Activated naive CD4-positive, alpha-beta T cell treated with anti-CD3 and anti-CD28 coated beads for 36 hours (primary cell): ENCODE measurements at regions of chr15 and their contacts with region 1.

Region 1: GRCh38 chr15:81296673-81297072 is 27.3 kb downstream of the STARD5 start:
- DNase-seq: peak; percentile 90
- H3K4me3 Mint-ChIP-seq: peak overlapping the region; percentile 93
- H3K27ac Mint-ChIP-seq: peak overlapping the region; percentile 99
- H3K4me1 Mint-ChIP-seq: peaks cover 66% of the 10 kb centered on the region
- H3K27me3 Mint-ChIP-seq: no peaks in the 10 kb centered on the region

Region 2: GRCh38 chr15:80804965-80805495 is 491.6 kb before region 1 on chr15:
- CTCF ChIA-PET with region 1: no interaction called
- intact Hi-C with region 1: loop called (anchors 10 kb)
- DNase-seq: peak; percentile 42
- H3K4me3 Mint-ChIP-seq: no peak overlapping the region
- H3K27ac Mint-ChIP-seq: no peak overlapping the region
- H3K4me1 Mint-ChIP-seq: peaks cover 24% of the 10 kb centered on the region
- H3K27me3 Mint-ChIP-seq: no peaks in the 10 kb centered on the region

Region 3: DNA sequence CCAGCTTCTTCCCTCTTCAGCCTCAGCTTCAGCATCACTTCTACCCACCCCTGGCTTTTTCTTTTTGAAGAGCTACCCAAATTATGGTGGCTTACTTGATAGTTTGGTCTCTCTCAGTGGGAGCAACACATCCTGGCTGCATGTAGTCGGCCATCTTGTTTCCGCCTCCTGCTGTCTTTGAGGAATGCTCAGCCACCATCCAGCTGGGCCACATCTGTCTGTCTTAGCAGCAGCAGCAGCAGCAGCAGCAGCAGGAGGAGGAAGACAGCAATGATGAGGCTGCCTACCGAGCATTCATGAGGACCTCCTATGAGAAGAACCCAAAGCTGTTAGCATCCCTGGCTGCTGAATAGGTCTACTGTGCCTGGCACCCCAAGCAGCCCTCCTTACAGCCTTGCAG is 80.3 kb before region 1 on chr15:
- CTCF ChIA-PET with region 1: no interaction called
- intact Hi-C with region 1: no loop called
- DNase-seq: no peak
- H3K4me3 Mint-ChIP-seq: no peak overlapping the region
- H3K27ac Mint-ChIP-seq: no peak overlapping the region
- H3K4me1 Mint-ChIP-seq: no peaks in the 10 kb centered on the region
- H3K27me3 Mint-ChIP-seq: peaks cover 3% of the 10 kb centered on the region

Region 4: GRCh38 chr15:81286621-81287121 is 10.0 kb before region 1 on chr15:
- CTCF ChIA-PET with region 1: interaction called, 8 read pairs
- intact Hi-C with region 1: loop called (anchors 1 kb)
- DNase-seq: peak; percentile 52
- H3K4me3 Mint-ChIP-seq: peak overlapping the region; percentile 75
- H3K27ac Mint-ChIP-seq: peak overlapping the region; percentile 95
- H3K4me1 Mint-ChIP-seq: peaks cover 83% of the 10 kb centered on the region
- H3K27me3 Mint-ChIP-seq: no peaks in the 10 kb centered on the region

Region 5: DNA sequence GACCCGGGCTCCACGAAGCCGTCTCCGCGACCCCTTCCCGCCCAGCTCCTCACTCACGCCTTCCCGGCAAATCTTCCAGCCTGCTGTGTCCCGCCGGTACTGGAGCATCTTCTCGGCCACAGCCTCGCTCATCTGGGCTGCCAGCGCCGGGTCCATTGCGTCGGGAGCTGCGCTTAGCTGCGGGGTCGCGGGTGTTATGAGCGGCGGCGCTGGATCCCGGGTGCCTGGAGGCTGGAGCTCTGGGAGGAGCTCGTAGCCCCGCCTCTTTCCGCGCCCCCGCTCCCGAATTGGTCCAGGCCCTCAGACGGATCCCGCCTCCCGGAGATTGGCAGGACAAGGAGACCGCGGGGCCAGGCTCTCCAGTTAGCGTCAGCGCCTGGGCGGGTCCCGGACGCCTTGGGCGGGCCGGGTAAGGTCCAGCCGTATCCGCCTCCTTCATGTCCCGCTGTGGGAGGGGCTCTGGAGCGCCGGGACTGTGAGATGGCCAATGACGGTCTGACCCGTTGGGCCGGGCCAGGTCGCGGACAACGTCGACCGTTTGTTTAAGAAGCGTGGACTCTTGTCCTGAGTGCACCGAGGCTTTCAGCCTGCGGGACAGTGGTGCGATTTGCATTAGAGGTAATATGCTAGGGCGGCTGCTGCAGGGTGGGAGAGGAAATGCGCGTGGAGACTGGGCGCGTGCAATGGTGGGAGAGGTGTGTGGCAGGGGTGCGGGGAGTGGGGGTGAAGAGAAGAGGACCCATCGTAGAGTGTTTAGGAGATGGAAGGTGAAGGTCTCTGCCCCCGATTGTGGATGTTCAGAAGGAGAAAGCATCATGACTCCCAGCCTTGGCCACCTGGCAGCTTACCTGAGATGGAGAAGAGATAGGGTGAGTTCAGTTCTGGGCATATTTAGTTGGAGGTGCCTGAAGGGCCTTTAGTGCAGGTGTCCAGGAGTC is 27.5 kb after region 1 on chr15 and contains the start of gene STARD5:
- CTCF ChIA-PET with region 1: interaction called, 4 read pairs
- intact Hi-C with region 1: loop called (anchors 1 kb)
- DNase-seq: peak; percentile 98
- H3K4me3 Mint-ChIP-seq: peak within 1 kb of the TSS; percentile 98
- H3K27ac Mint-ChIP-seq: peak within 1 kb of the TSS; percentile 78
- H3K4me1 Mint-ChIP-seq: peaks cover 38% of the 10 kb centered on the region
- H3K27me3 Mint-ChIP-seq: no peaks in the 10 kb centered on the region
- total RNA-seq, gene STARD5: 10.1 to 11.7 TPM

Region 6: DNA sequence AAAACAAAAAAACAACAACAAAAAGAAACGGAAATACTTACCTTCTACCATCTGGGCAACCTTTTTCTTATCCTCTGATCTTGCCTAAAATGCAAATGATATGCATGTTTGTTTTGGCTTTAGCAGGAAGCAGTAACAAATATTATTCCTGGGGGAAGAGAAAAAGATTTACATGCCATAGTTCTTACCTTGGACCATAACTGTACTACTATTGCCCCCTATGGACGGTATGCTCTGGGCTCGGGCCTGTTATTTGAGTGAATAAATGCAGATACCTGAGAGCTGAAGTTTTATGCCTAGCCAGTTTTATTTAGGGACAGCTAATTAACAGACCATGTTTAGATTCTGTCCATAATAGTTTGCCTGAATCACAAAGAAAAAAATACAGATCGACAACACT is 39.9 kb after region 1 on chr15:
- CTCF ChIA-PET with region 1: interaction called, 3 read pairs
- intact Hi-C with region 1: loop called (anchors 1 kb)
- DNase-seq: peak; percentile 69
- H3K4me3 Mint-ChIP-seq: no peak overlapping the region
- H3K27ac Mint-ChIP-seq: no peak overlapping the region
- H3K4me1 Mint-ChIP-seq: peaks cover 15% of the 10 kb centered on the region
- H3K27me3 Mint-ChIP-seq: no peaks in the 10 kb centered on the region

Region 7: DNA sequence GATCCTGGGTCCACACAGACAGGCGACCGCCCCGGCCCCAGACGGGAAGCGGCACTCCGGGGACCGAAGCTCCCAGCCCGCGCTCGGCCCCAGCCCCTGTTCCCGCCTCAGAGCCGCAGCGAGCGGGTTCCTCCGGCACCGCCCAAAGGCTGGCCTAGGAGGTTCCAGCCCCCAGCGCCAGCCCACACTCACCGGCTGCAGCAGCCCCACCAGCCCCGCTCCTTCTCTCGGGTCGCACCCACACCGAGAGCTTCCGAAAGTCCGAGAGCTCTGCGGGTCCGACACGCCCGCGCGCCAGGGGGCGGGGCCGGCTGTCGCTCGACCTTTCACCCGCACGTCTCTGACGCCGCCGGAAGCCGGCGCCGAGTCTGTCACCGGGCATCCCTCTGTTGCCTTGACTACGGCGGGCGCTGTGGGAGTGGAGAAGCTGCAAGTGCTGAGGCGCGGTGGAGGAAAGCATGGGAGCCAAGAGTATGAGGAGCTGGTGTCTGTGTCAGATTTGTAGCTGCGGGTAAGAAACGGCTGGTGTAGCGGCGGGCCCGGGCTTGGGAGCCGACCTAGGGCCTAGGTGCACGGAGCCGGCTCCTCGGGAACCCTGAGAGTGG is 965.9 kb after region 1 on chr15 and contains the starts of genes EFL1 and SAXO2:
- CTCF ChIA-PET with region 1: no interaction called
- intact Hi-C with region 1: loop called (anchors 10 kb)
- DNase-seq: peak; percentile 94
- H3K4me3 Mint-ChIP-seq: peak within 1 kb of the TSS; percentile 93
- H3K27ac Mint-ChIP-seq: peak within 1 kb of the TSS; percentile 71
- H3K4me1 Mint-ChIP-seq: peaks cover 25% of the 10 kb centered on the region
- H3K27me3 Mint-ChIP-seq: no peaks in the 10 kb centered on the region
- total RNA-seq, gene EFL1: 15.8 to 18.6 TPM
- total RNA-seq, gene SAXO2: 0.69 to 0.79 TPM